Right ventricle myocardium inferior (tissue), 1 donor: ENCODE measurements at regions of chr16 and their contacts with region 1.

Region 1: GRCh38 chr16:25066747-25067631 is 44.6 kb upstream of the LCMT1 start:
- DNase-seq: peak; percentile 91
- ATAC-seq: peak; percentile 96

Region 2: DNA sequence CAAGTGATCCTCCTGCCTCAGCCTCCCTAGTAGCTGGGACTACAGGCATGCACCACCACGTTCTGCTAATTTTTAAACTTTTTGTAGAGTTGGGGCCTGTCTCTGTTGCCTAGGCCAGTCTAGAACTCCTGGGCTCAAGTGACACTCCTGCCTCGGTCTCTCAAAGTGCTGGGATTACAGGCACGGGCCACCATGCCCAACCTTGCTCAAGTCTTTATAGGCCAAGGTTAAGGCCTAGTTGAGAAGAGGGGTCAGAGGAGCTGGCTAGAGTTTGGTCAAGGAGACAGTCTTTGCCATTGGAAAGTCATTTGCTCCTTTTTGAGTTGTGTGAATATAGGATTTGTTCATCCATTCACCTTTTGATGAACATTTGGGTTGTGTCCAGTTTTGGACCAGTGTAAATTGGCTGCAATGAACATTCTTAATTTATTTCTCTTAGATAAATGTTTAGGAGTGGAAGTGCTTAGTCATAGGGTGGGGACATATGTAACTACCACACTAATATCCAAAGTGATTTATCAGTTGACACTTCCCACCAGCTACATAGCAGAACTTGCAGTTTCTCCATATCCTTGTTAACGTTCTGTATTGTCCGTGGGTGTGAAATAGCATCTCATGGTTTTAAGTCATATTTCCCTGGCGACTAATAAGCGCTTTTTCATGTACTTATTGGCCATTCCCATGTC is 21.1 kb before region 1 on chr16:
- intact Hi-C with region 1: loop called (anchors 2 kb)
- DNase-seq: no peak
- ATAC-seq: no peak

Region 3: GRCh38 chr16:25106567-25107465 is 39.8 kb after region 1 on chr16:
- intact Hi-C with region 1: loop called (anchors 2 kb)
- DNase-seq: peak; percentile 98
- ATAC-seq: peak; percentile 93